ENCODE measurements at regions of chrX and their contacts with region 1.

Region 1: GRCh38 chrX:79259073-79259689 is 108.0 kb downstream of the ITM2A start:
- DNase-seq: no peak
- ATAC-seq: peak; percentile 83
- H3K4me3 Mint-ChIP-seq: peak overlapping the region; percentile 59
- H3K27ac Mint-ChIP-seq: peak overlapping the region; percentile 91
- H3K4me1 Mint-ChIP-seq: peaks cover 72% of the 10 kb centered on the region
- H3K27me3 Mint-ChIP-seq: no peaks in the 10 kb centered on the region
- CTCF ChIP-seq: no peak

Region 2: GRCh38 chrX:78327370-78328086 is 931.7 kb before region 1 on chrX and contains the start of gene CYSLTR1:
- CTCF ChIA-PET with region 1: no interaction called
- POLR2A ChIA-PET with region 1: no interaction called
- intact Hi-C with region 1: loop called (anchors 5 kb)
- DNase-seq: no peak
- ATAC-seq: peak; percentile 64
- H3K4me3 Mint-ChIP-seq: peak within 1 kb of the TSS; percentile 89
- H3K27ac Mint-ChIP-seq: peak within 1 kb of the TSS; percentile 94
- H3K4me1 Mint-ChIP-seq: peaks cover 74% of the 10 kb centered on the region
- H3K27me3 Mint-ChIP-seq: no peaks in the 10 kb centered on the region
- CTCF ChIP-seq: no peak
- total RNA-seq, gene CYSLTR1: 20.5 and 20.7 TPM in 2 replicates

Region 3: GRCh38 chrX:79182616-79183015 is 76.6 kb before region 1 on chrX:
- CTCF ChIA-PET with region 1: no interaction called
- POLR2A ChIA-PET with region 1: interaction called, 3 read pairs
- intact Hi-C with region 1: loop called (anchors 5 kb)
- DNase-seq: no peak
- ATAC-seq: peak; percentile 56
- H3K4me3 Mint-ChIP-seq: peak overlapping the region; percentile 28
- H3K27ac Mint-ChIP-seq: peak overlapping the region; percentile 78
- H3K4me1 Mint-ChIP-seq: peaks cover 40% of the 10 kb centered on the region
- H3K27me3 Mint-ChIP-seq: no peaks in the 10 kb centered on the region
- CTCF ChIP-seq: no peak

Region 4: GRCh38 chrX:79195027-79195426 is 64.2 kb before region 1 on chrX:
- CTCF ChIA-PET with region 1: no interaction called
- POLR2A ChIA-PET with region 1: no interaction called
- intact Hi-C with region 1: no loop called
- DNase-seq: no peak
- ATAC-seq: no peak
- H3K4me3 Mint-ChIP-seq: no peak overlapping the region
- H3K27ac Mint-ChIP-seq: no peak overlapping the region
- H3K4me1 Mint-ChIP-seq: peaks cover 2% of the 10 kb centered on the region
- H3K27me3 Mint-ChIP-seq: no peaks in the 10 kb centered on the region
- CTCF ChIP-seq: no peak